ENCODE measurements at regions of chr21 and their contacts with region 1.

Region 1: GRCh38 chr21:42097860-42098454 is 26.8 kb downstream of the UMODL1 start:
- DNase-seq: peak in 1 of 2 donors; percentile 71
- H3K4me3 ChIP-seq: no peak overlapping the region
- H3K27ac ChIP-seq: peak overlapping the region; percentile 72 to 78
- H3K4me1 ChIP-seq: no peaks in the 10 kb centered on the region
- H3K27me3 ChIP-seq: no peaks in the 10 kb centered on the region
- CTCF ChIP-seq: no peak
- POLR2A ChIP-seq: no peak

Region 2: DNA sequence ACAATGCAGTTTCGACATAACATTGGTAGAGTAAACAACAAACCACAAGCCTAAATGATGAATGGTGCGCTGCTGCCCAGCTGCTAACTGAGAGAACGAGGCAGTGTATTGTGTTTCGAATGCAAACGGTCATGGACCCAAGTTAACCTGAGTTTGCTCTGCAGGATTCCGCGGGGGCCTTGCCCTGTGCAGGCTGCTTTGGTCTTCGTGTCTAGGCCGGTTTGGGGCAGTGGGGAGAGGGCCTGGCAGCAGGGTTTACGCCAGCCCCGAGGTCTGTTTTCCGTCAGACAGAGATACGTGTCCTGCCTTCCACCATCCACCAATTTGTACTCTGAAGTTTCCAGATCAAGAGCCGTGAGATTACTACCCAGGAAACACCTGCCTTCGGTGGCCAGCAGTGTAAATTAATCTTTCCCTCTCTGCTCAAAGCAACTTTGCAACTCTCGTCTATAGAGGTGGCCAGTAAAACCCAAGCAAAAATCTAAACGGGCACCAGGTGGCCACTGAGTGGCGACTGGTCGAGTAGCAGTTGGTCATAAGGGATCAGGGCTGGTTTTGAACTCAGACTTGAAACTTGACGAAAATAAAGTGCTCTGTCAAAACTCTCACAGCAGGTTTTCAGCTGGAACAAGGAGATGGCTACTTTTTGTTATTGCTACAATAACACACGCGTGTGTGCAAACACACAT is 212.5 kb before region 1 on chr21:
- intact Hi-C with region 1: loop called (anchors 5 kb)
- DNase-seq: no peak
- H3K4me3 ChIP-seq: no peak overlapping the region
- H3K27ac ChIP-seq: no peak overlapping the region
- H3K4me1 ChIP-seq: no peaks in the 10 kb centered on the region
- H3K27me3 ChIP-seq: no peaks in the 10 kb centered on the region
- CTCF ChIP-seq: no peak
- POLR2A ChIP-seq: no peak

Region 3: GRCh38 chr21:42117229-42117966 is 19.4 kb after region 1 on chr21:
- intact Hi-C with region 1: loop called (anchors 1 kb)
- DNase-seq: peak; percentile 56 to 76
- H3K4me3 ChIP-seq: no peak overlapping the region
- H3K27ac ChIP-seq: no peak overlapping the region
- H3K4me1 ChIP-seq: peaks cover 4 to 16% of the 10 kb centered on the region in 2 donors
- H3K27me3 ChIP-seq: no peaks in the 10 kb centered on the region
- CTCF ChIP-seq: peak; percentile 90 to 97 (median 94)
- POLR2A ChIP-seq: no peak

Measured in breast epithelium (tissue), 4 donors.